Panc1 (cell line): ENCODE measurements at regions of chr1 and their contacts with region 1.

Region 1: GRCh38 chr1:180080433-180080832 is 74.2 kb upstream of the QSOX1 start:
- DNase-seq: peak; percentile 53
- ATAC-seq: 0 out of 2 replicates have a peak, but pooled peaks have one; percentile 56
- H3K4me3 ChIP-seq: no peak overlapping the region
- H3K27ac ChIP-seq: no peak overlapping the region
- H3K4me1 ChIP-seq: no peaks in the 10 kb centered on the region
- H3K27me3 ChIP-seq: no peaks in the 10 kb centered on the region
- CTCF ChIP-seq: no peak

Region 2: GRCh38 chr1:180042988-180043622 is 37.3 kb before region 1 on chr1:
- CTCF ChIA-PET with region 1: no interaction called
- POLR2A ChIA-PET with region 1: interaction called, 11 read pairs
- in situ Hi-C with region 1: no loop called
- intact Hi-C with region 1: no loop called
- DNase-seq: no peak
- ATAC-seq: no peak
- H3K4me3 ChIP-seq: no peak overlapping the region
- H3K27ac ChIP-seq: no peak overlapping the region
- H3K4me1 ChIP-seq: no peaks in the 10 kb centered on the region
- H3K27me3 ChIP-seq: no peaks in the 10 kb centered on the region
- CTCF ChIP-seq: no peak

Region 3: GRCh38 chr1:180178511-180179161 is 98.2 kb after region 1 on chr1:
- CTCF ChIA-PET with region 1: no interaction called
- POLR2A ChIA-PET with region 1: no interaction called
- in situ Hi-C with region 1: no loop called
- intact Hi-C with region 1: loop called (anchors 5 kb)
- DNase-seq: peak; percentile 60
- ATAC-seq: peak; percentile 74
- H3K4me3 ChIP-seq: no peak overlapping the region
- H3K27ac ChIP-seq: no peak overlapping the region
- H3K4me1 ChIP-seq: no peaks in the 10 kb centered on the region
- H3K27me3 ChIP-seq: no peaks in the 10 kb centered on the region
- CTCF ChIP-seq: peak; percentile 98